Gastrocnemius medialis (tissue), 4 donors: ENCODE measurements at regions of chr11 and their contacts with region 1.

Region 1: GRCh38 chr11:69115586-69116560 is 39.9 kb upstream of the SMIM38 start:
- DNase-seq: peak in 1 of 2 donors; percentile 56
- ATAC-seq: peak in 1 of 2 donors; percentile 69
- H3K4me3 ChIP-seq: peak overlapping the region in 3 of 4 donors; percentile 10 to 40 (median 15)
- H3K27ac ChIP-seq: no peak overlapping the region
- H3K4me1 ChIP-seq: peaks cover 0 to 14% of the 10 kb centered on the region in 2 donors
- H3K27me3 ChIP-seq: no peaks in the 10 kb centered on the region
- CTCF ChIP-seq: no peak
- POLR2A ChIP-seq: no peak

Region 2: DNA sequence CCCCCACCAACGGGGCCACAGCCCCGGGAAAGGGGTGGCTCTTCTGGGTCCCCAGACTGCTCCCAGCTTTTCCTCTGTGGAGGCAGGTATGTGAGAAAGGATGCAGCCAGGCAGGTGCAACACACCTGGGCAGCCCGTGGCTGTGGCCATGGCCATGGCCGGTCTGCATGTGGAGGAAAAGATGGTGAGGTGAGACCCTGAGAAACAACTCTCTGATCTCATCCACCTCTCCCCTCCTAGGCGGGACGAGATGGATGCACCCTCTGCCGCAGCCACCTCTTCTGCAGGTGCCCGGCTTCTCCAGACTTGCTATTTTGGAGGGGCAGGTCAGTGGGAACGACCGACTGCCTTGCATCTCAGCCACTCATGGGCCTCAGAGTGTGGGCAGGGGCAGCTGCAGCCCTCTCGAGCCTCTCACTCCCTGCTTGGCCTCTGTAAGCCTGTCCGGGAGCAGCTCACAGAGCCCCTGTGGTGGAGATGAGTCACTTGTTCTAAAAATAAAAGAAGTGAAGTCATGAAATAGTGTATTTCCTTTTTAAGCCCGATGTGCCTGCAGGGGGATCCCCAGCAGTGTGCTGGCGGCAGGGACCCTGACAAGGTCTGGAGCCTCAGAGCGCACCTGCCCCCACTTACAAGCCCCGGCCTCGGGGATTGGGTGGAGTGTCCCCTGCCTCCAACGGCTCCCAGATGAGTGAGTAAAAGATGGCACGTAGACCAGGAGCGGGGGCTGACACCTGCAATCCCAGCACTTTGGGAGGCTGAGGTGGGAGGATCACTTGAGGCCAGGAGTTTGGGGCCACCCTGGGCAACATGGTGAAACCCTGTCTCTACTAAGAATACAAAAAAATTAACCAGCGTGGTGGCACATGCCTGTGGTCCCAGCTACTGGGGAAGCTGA is 50.6 kb after region 1 on chr11:
- in situ Hi-C with region 1: no loop called
- intact Hi-C with region 1: no loop called
- DNase-seq: peak in 1 of 2 donors; percentile 30
- ATAC-seq: peak; percentile 83 to 91
- H3K4me3 ChIP-seq: no peak overlapping the region
- H3K27ac ChIP-seq: no peak overlapping the region
- H3K4me1 ChIP-seq: peaks cover 0 to 11% of the 10 kb centered on the region in 2 donors
- H3K27me3 ChIP-seq: no peaks in the 10 kb centered on the region
- CTCF ChIP-seq: no peak
- POLR2A ChIP-seq: no peak

Region 3: GRCh38 chr11:69654569-69655327 is 538.9 kb after region 1 on chr11:
- in situ Hi-C with region 1: loop called in 3 of 4 experiments (anchors 10 to 25 kb)
- intact Hi-C with region 1: no loop called
- DNase-seq: peak in 1 of 2 donors; percentile 8
- ATAC-seq: no peak
- H3K4me3 ChIP-seq: no peak overlapping the region
- H3K27ac ChIP-seq: no peak overlapping the region
- H3K4me1 ChIP-seq: peaks cover 0 to 5% of the 10 kb centered on the region in 2 donors
- H3K27me3 ChIP-seq: no peaks in the 10 kb centered on the region
- CTCF ChIP-seq: no peak
- POLR2A ChIP-seq: no peak